ENCODE measurements at regions of chr5 and their contacts with region 1.

Region 1: DNA sequence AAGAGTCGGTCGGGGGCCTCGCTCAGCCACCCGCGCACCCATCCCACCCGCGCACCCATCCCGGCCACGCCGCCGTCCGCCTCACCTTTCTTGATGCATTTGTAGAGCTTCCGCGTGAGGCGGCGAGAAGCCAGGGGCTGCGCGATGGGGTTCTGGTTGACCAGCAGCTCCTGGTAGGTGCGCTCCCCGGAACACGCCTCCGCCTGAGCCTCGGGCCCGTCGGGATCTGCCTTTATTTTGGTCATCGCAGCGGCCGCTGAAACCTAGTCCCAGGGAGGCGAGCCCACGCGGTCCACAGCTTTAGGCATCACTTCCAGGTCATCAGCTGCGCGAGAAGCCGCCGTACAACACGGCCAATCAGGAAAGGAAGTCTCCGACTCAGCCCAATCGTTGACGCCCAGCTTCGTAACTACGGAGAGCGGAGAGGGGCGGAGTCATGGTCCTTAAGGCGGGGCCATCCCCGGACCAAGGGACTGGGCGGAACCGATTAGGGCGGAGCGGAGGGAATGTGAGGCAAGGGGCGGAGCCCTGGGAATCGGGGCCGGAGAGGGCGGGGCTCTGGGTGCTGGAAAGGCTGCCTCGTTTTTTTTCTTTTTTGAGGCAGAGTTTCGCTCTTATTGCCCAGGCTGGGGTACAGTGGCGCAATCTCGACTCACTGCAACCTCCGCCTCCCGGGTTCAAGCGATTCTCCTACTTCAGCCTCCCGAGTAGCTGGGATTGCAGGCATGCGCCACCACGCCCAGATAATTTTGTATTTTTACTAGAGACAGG is at the start of gene NHP2:
- DNase-seq: peak; percentile 98
- H3K4me3 Mint-ChIP-seq: peak within 1 kb of the TSS; percentile 97
- H3K27ac Mint-ChIP-seq: peak within 1 kb of the TSS; percentile 86
- H3K4me1 Mint-ChIP-seq: peaks cover 54% of the 10 kb centered on the region
- H3K27me3 Mint-ChIP-seq: no peaks in the 10 kb centered on the region
- total RNA-seq, gene NHP2: 264 and 265 TPM in 2 replicates

Region 2: DNA sequence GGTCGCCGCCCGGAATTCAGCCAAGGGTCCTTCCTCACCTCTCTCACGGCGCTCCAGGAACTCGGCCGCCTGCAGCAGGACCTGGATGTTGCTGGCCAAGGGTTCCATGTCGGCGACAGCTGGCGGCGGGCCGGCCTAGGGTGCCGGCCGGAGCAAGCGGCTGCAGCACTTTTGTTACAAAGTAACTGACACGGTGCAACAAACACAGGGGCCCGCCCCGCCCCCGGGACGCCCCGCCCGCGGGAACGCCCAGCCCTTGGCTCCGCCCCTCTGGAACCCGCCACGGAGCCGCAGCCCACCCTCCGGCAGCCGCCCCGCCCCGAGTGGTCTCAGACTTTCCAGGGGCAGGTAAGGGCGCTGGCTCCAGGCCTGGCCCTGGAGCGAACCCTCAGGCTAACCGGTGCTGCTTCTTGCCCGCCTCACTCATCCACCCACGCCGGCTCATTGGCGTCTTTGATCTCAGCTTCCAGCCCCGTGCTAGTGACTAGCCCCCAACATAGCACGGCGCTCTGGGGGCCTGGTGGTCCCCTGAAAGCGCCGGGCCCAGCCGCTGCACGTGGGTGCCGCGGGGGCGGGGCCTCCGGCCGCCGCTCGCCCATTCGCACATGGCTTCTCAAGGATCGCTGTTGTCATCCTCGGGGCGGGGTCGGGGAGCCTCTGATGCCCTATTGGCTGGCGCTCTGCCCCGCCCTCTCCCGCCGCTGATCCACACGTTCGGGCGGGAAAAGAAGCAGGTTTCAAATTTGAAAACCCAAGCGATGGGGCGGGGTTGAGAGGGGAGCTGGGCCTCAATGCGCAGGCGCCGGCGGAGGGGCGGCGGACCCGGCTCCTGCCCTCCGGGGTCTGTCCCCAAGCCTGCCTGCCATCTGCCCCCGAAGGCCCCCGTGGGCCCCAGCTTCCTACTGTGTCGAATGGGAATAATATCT is 841.8 kb before region 1 on chr5 and contains the start of gene MXD3:
- intact Hi-C with region 1: loop called (anchors 5 kb)
- DNase-seq: peak; percentile 96
- H3K4me3 Mint-ChIP-seq: peak within 1 kb of the TSS; percentile 89
- H3K27ac Mint-ChIP-seq: peak within 1 kb of the TSS; percentile 85
- H3K4me1 Mint-ChIP-seq: peaks cover 44% of the 10 kb centered on the region
- H3K27me3 Mint-ChIP-seq: no peaks in the 10 kb centered on the region
- total RNA-seq, gene MXD3: 9.6 and 11.8 TPM in 2 replicates

Region 3: GRCh38 chr5:178113199-178113787 is 40.5 kb before region 1 on chr5 and contains the start of gene N4BP3:
- intact Hi-C with region 1: loop called (anchors 1 kb)
- DNase-seq: peak; percentile 83
- H3K4me3 Mint-ChIP-seq: peak within 1 kb of the TSS; percentile 89
- H3K27ac Mint-ChIP-seq: peak within 1 kb of the TSS; percentile 92
- H3K4me1 Mint-ChIP-seq: peaks cover 37% of the 10 kb centered on the region
- H3K27me3 Mint-ChIP-seq: peaks cover 38% of the 10 kb centered on the region
- total RNA-seq, gene N4BP3: 1.8 TPM in 2 replicates

Region 4: DNA sequence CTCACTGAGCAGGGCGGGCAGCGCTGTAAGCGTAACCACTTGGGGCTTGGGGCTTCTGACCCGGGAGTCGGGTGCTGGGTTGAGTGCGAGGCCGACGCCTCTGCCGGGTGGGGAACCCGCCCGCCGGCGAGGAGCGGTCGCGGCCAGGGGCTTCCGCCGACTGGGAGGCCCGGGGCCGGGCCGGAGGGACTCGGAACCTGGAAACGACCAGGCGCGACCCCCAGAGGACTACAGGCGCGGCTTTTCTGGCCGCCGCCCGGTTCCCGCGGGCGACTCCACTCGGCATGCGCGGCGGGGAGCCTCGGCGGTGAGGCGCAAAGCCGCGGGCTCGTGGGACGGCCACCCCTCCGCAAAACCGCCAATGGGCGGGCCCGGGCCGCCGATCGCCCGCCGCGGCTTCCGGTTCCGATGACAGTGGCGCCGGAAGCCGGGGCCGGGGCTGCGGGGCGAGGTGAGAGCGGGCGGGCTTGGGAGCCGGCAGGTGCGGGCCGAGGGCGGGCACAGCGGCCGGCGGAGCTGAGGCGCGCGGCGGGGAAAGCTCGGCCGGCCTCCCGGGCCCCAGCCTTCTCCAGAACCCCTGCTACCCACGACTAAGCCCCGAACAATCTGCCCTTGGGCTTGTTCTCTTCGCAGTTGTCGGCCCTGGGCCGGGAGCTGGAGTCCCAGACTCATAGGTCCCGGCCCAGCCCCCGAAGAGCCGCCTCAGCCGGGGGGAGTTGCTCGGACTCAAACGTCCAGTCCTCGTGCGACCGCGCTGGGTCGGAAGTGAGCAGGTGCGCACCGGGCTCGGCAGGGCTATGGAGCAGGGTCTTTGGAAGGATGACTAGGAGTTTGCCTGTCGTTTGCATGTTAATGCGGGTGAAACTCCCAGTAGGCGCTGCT is 22.9 kb before region 1 on chr5 and contains the start of gene RMND5B:
- intact Hi-C with region 1: loop called (anchors 1 kb)
- DNase-seq: peak; percentile 80
- H3K4me3 Mint-ChIP-seq: peak within 1 kb of the TSS; percentile 83
- H3K27ac Mint-ChIP-seq: peak within 1 kb of the TSS; percentile 54
- H3K4me1 Mint-ChIP-seq: peaks cover 11% of the 10 kb centered on the region
- H3K27me3 Mint-ChIP-seq: peaks cover 3% of the 10 kb centered on the region
- total RNA-seq, gene RMND5B: 23.9 and 28.0 TPM in 2 replicates

Region 5: DNA sequence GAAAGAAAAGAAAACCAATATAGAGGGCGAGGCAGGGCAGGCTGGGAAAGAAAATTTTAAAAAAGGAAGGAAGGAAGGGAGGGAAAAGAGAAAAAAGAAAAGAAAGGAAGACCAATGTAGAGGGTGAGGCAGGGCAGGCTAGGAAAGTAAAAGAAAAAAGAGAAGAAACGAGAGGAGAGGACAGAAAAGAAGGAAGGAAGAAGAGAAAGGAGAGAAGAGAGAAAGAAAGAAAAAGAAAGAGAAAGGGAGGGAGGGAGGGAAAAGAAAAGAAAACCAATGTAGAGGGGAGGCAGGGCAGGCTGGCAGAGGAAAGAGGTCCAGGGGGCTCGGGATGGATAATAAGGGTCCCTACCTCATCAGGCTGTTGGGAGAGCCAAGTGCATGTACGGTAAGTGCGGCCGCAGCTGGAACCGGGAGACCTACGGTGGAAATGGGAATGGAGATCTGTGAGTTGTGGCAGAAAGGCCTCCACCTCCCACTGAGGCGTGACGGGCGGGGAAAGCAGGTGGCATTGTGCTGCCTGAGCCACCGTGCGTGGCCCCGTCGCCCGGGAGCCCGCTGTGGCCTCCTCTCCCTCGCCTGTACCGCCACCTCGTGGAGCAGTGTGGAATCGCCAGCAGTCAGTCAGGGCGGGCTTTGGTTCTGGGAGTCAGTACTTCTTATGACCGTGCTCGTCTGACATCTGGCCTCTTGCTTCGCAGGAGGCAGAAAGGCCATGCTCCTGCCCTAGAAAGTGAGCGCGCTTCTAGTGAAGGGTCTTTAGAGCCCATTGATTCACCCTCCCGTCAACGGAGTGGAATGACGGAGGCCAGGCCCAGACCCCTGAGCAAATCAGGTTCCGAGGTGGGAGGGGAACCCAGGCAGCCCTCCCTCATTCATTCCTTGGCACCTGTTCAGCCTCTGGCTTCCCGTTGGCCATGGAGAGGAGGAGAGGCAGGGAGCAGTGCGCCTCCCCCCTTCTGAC is 10.3 kb after region 1 on chr5:
- intact Hi-C with region 1: loop called (anchors 1 kb)
- DNase-seq: peak; percentile 84
- H3K4me3 Mint-ChIP-seq: no peak overlapping the region
- H3K27ac Mint-ChIP-seq: no peak overlapping the region
- H3K4me1 Mint-ChIP-seq: no peaks in the 10 kb centered on the region
- H3K27me3 Mint-ChIP-seq: peaks cover 19% of the 10 kb centered on the region

Region 6: GRCh38 chr5:178204182-178204894 is 50.6 kb after region 1 on chr5 and contains the start of gene HNRNPAB:
- intact Hi-C with region 1: loop called (anchors 1 kb)
- DNase-seq: peak; percentile 94
- H3K4me3 Mint-ChIP-seq: peak within 1 kb of the TSS; percentile 99
- H3K27ac Mint-ChIP-seq: peak within 1 kb of the TSS; percentile 100
- H3K4me1 Mint-ChIP-seq: peaks cover 35% of the 10 kb centered on the region
- H3K27me3 Mint-ChIP-seq: peaks cover 2% of the 10 kb centered on the region
- total RNA-seq, gene HNRNPAB: 459 and 472 TPM in 2 replicates

Region 7: DNA sequence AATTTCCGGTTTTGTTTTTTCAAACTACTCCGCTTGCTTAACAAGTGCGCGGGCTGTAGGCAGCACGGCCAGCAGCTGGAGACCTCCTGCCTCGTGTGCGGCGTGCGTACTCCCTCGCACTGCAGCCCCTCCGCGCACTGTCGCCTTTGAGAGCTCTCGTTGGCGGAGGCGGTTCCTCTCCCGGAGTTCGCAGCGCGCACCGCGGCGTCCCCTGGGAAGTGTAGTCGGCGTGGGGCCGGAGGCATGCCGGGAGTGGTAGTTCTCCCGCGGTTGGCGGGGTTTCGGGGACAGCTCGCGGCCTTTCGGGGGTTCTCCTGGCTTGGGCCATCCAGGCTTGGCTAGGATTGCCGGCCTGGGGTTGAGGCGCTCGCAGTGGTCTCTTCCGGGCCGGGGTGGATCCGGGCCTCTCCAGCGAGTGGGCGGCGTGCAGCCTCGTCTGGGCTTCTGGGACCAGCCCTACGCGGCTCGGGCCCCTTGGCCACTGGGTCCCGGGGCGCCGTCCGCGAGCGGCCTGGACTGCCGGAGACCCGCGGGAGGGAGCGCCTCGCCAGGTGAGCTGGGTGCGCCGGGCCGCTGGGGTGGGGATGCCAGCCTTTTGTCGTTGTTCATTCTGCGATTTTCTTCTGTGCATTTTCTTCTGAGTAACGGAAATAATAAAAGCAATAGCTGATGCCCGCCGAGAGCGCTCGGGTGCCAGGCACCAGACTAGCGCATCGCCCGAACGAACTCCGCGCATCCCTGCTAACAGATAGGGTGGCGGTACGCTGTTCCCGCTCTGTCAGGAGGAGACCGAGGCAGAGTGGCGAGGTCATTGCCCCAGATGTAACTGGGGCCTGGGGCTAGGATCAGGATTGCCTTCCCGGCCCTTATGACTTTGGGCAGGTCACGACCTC is 906.6 kb after region 1 on chr5 and contains the start of gene ZNF354C:
- intact Hi-C with region 1: no loop called
- DNase-seq: peak; percentile 76
- H3K4me3 Mint-ChIP-seq: peak within 1 kb of the TSS; percentile 88
- H3K27ac Mint-ChIP-seq: peak within 1 kb of the TSS; percentile 61
- H3K4me1 Mint-ChIP-seq: no peaks in the 10 kb centered on the region
- H3K27me3 Mint-ChIP-seq: no peaks in the 10 kb centered on the region
- total RNA-seq, gene ZNF354C: 3.5 and 4.1 TPM in 2 replicates